ENCODE measurements at regions of chr1 and their contacts with region 1.

Region 1: DNA sequence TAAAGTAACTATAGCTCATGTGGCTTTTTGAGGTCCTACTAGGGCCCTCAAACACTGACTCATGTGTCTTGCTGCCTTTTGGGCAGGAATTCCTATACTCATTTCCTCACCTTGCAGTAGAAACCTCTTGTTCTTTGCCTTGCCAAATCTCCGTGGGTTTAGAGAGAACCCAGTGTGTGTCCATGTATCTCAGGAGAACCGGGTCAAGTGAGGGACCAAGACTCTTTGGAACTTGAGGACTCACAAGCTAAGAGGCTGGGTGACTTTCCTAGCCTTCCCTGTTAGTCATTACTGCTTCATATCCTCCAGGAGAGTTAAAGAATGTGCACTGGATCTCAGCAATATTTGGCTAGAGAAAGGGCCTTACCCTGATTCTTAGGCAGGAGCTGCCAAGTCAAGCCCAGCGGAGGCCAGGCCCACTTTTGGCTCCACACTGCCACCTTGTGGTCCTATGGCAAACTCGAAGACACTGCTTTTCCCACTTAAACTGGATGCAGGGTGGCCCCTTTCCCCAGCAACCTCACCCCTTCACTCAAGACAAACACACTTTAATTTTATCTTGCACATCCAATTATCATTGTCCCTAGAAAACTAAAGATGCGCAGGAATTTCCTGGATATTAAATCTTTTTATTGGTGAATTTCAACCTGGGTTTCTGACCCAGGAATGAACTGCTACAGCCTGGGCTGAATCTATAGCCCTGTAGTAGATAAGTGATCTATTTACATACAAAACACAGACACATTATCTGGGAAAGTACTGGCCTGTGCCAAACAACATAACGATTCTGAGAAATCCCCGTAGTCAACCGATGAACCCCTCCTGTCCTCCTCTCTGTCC is 10.6 kb downstream of the AVPR1B start:
- DNase-seq: peak; percentile 37 to 77 (median 67)
- ATAC-seq: peak; percentile 90
- H3K4me3 ChIP-seq: no peak overlapping the region
- H3K4me3 Mint-ChIP-seq: no peak overlapping the region
- H3K27ac ChIP-seq: no peak overlapping the region
- H3K27ac Mint-ChIP-seq: no peak overlapping the region
- H3K4me1 ChIP-seq: no peaks in the 10 kb centered on the region
- H3K4me1 Mint-ChIP-seq: peaks cover 0 to 6% (median 0%) of the 10 kb centered on the region in 7 donors
- H3K27me3 ChIP-seq: no peaks in the 10 kb centered on the region
- H3K27me3 Mint-ChIP-seq: peaks cover 0 to 33% (median 3%) of the 10 kb centered on the region in 5 donors

Region 2: DNA sequence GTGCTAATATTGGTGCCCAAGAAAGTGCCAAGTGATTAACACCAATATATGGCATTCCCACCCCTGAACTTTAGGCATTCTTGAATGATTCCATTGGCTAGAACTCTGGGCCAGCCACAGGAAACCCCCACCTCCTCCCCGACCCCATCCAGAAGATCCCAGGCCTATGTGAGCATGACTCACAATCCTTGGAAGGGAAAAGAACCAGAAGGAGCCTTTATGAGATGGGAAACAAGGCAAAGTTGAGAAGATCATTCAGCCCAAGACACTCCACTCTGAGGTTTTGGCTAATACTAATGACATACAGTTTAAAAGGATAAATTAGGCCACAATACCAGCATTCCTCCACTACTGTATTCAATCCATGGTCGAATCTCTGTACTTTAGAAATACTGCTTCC is 496.5 kb before region 1 on chr1:
- CTCF ChIA-PET with region 1: no interaction called
- POLR2A ChIA-PET with region 1: no interaction called
- intact Hi-C with region 1: no loop called
- DNase-seq: no peak
- ATAC-seq: no peak
- H3K4me3 ChIP-seq: no peak overlapping the region
- H3K4me3 Mint-ChIP-seq: peak overlapping the region in 1 of 10 donors; percentile 50
- H3K27ac ChIP-seq: no peak overlapping the region
- H3K27ac Mint-ChIP-seq: peak overlapping the region in 6 of 9 donors; percentile 12 to 87 (median 52)
- H3K4me1 ChIP-seq: peaks cover 12 to 22% of the 10 kb centered on the region in 2 donors
- H3K4me1 Mint-ChIP-seq: peaks cover 20 to 71% (median 57%) of the 10 kb centered on the region in 7 donors
- H3K27me3 ChIP-seq: no peaks in the 10 kb centered on the region
- H3K27me3 Mint-ChIP-seq: no peaks in the 10 kb centered on the region

Region 3: DNA sequence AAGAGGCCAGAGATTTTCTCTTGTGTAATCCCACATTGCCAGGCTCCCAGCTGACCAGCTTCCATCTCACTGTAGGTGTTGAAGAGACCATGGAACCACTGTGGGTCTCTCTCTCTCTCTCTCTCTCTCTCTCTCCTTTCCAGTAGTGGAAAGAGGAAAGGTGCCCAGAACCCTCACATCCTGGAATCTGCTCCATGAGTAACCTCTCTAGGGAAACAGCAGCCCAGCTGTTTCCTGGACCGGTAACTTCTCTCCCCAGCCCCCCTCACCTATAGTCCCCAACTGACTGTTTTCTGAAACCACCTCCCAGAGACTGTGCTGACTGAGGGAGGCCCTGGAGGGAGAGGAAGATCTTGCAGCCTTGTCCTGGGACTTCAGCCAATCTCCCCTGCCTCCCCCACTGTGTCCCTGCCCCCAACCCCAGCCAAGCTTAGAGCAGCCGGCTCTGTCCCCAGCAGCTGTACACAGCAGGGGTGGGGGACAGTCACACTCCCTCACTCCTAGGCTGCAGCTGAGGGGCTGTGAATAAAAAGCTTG is 405.6 kb before region 1 on chr1:
- CTCF ChIA-PET with region 1: no interaction called
- POLR2A ChIA-PET with region 1: no interaction called
- intact Hi-C with region 1: no loop called
- DNase-seq: no peak
- ATAC-seq: no peak
- H3K4me3 ChIP-seq: no peak overlapping the region
- H3K4me3 Mint-ChIP-seq: no peak overlapping the region
- H3K27ac ChIP-seq: no peak overlapping the region
- H3K27ac Mint-ChIP-seq: peak overlapping the region in 1 of 9 donors; percentile 32
- H3K4me1 ChIP-seq: no peaks in the 10 kb centered on the region
- H3K4me1 Mint-ChIP-seq: peaks cover 0 to 16% (median 8%) of the 10 kb centered on the region in 7 donors
- H3K27me3 ChIP-seq: no peaks in the 10 kb centered on the region
- H3K27me3 Mint-ChIP-seq: peaks cover 4 to 19% (median 12%) of the 10 kb centered on the region in 5 donors

Region 4: DNA sequence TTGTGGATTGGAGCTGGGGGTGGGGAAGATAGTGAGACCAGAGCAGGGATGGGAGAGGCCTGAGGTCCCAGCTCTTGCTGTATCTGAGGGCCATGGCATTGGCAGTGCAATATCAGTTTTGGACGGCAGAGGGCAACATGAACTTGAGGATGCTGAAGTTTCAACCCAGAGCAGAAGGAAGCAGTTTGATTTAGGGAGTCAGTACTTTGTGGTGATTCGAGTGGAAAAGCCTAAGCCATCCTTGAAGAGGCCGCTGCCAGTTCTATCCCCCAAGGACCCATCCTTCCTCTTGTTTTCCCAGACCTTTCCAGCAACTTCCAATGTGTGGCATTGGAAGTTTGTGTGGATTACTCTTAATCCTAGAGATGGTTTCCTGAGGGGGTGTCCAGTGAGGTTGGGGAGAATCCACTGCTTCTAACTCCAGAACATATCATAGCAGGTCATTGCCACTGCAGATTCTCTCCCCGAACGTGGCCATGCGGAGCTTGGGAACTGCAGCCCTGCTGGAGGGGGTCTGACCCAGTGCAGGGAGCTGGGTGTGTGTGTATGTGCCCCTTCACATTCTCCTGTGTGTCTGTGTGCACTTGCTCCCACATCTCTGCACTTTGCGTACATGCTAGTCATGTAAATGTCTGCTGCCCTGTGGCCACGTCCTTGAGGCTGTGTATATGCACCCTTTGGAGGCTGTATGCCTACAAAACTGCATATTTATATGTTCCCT is 187.4 kb before region 1 on chr1:
- CTCF ChIA-PET with region 1: interaction called, 10 read pairs
- POLR2A ChIA-PET with region 1: no interaction called
- intact Hi-C with region 1: loop called in 1 of 2 experiments (anchors 2 kb)
- DNase-seq: peak; percentile 11 to 66 (median 47)
- ATAC-seq: peak; percentile 80
- H3K4me3 ChIP-seq: no peak overlapping the region
- H3K4me3 Mint-ChIP-seq: no peak overlapping the region
- H3K27ac ChIP-seq: no peak overlapping the region
- H3K27ac Mint-ChIP-seq: no peak overlapping the region
- H3K4me1 ChIP-seq: no peaks in the 10 kb centered on the region
- H3K4me1 Mint-ChIP-seq: no peaks in the 10 kb centered on the region
- H3K27me3 ChIP-seq: no peaks in the 10 kb centered on the region
- H3K27me3 Mint-ChIP-seq: peaks cover 0 to 3% (median 0%) of the 10 kb centered on the region in 5 donors

Region 5: GRCh38 chr1:205983925-205984725 is 122.4 kb before region 1 on chr1:
- CTCF ChIA-PET with region 1: interaction called, 4 read pairs
- POLR2A ChIA-PET with region 1: no interaction called
- intact Hi-C with region 1: loop called (anchors 1 kb)
- DNase-seq: no peak
- ATAC-seq: peak; percentile 41
- H3K4me3 ChIP-seq: no peak overlapping the region
- H3K4me3 Mint-ChIP-seq: no peak overlapping the region
- H3K27ac ChIP-seq: no peak overlapping the region
- H3K27ac Mint-ChIP-seq: peak overlapping the region in 1 of 9 donors; percentile 10
- H3K4me1 ChIP-seq: no peaks in the 10 kb centered on the region
- H3K4me1 Mint-ChIP-seq: no peaks in the 10 kb centered on the region
- H3K27me3 ChIP-seq: no peaks in the 10 kb centered on the region
- H3K27me3 Mint-ChIP-seq: peaks cover 0 to 1% (median 0%) of the 10 kb centered on the region in 5 donors

Region 6: DNA sequence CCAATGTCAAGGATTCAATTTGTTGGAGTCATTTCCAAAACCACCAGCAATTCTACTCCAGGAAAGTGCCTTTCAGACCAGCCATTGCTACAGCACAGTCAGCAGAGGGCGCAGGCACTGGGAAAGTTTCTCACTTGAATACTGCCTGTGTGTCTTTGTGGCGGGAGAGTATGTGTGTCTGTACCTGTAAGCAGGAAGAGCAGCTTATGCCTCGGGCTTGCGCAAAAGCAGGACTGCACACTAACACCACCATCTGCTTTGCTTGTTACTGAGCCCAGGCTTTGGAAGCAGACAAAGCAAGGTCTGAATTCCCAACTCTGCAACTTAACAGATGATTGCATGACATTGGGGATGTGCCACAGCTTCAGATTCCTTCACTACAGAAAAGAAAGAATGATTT is 75.8 kb before region 1 on chr1:
- CTCF ChIA-PET with region 1: interaction called, 34 read pairs
- POLR2A ChIA-PET with region 1: no interaction called
- intact Hi-C with region 1: loop called in 1 of 2 experiments (anchors 1 kb)
- DNase-seq: peak; percentile 33 to 69 (median 58)
- ATAC-seq: peak; percentile 86
- H3K4me3 ChIP-seq: no peak overlapping the region
- H3K4me3 Mint-ChIP-seq: peak overlapping the region in 1 of 10 donors; percentile 6
- H3K27ac ChIP-seq: no peak overlapping the region
- H3K27ac Mint-ChIP-seq: peak overlapping the region in 1 of 9 donors; percentile 58
- H3K4me1 ChIP-seq: peaks cover 0 to 4% of the 10 kb centered on the region in 2 donors
- H3K4me1 Mint-ChIP-seq: peaks cover 0 to 12% (median 11%) of the 10 kb centered on the region in 7 donors
- H3K27me3 ChIP-seq: peaks cover 0 to 2% of the 10 kb centered on the region in 2 donors
- H3K27me3 Mint-ChIP-seq: peaks cover 0 to 72% (median 9%) of the 10 kb centered on the region in 5 donors

Region 7: GRCh38 chr1:206128196-206128595 is 21.6 kb after region 1 on chr1:
- CTCF ChIA-PET with region 1: no interaction called
- POLR2A ChIA-PET with region 1: no interaction called
- intact Hi-C with region 1: no loop called
- DNase-seq: no peak
- ATAC-seq: peak; percentile 54
- H3K4me3 ChIP-seq: no peak overlapping the region
- H3K4me3 Mint-ChIP-seq: no peak overlapping the region
- H3K27ac ChIP-seq: no peak overlapping the region
- H3K27ac Mint-ChIP-seq: no peak overlapping the region
- H3K4me1 ChIP-seq: no peaks in the 10 kb centered on the region
- H3K4me1 Mint-ChIP-seq: no peaks in the 10 kb centered on the region
- H3K27me3 ChIP-seq: no peaks in the 10 kb centered on the region
- H3K27me3 Mint-ChIP-seq: peaks cover 13 to 51% (median 39%) of the 10 kb centered on the region in 5 donors

Measured in naive thymus-derived CD4-positive, alpha-beta T cell (primary cell).